Heart left ventricle (tissue), 16 donors: ENCODE measurements at regions of chr13 and their contacts with region 1.

Region 1: DNA sequence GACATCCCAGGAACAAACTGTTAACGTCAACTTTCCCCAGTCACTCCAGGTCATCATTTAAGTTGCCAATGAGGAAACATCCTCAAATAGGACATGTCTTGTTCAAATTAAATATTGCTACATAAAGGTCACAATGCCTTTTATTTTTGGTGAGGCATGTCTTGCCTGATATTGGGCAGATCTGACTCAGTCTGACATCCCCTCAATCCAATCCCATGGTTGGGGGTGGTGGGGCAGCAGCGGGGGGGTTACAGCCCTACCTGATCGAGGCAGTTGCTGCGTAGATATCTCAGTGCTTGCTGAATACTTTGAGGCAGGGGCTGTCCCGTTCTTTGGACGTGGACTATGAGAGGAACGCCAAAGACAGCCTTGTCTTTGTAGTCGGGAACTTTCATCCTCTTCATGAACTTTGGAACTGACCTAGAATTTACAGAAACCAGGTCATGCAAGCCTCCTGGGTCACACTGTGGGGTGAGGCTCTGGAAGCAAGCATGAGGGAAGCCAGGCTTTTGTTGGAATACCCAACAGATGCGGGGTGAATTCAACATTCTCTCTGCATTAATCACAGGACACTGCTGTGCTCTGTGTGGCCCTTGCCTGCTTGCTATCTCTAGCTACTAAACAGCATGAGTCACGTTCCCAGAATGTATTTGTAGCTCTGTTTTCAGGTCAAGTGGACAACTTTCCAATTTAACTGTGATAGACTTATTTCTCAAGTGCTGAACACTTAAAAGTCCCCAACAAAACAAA is 109.8 kb downstream of the KL start:
- DNase-seq: peak; percentile 71 to 82 (median 76)
- ATAC-seq: peak; percentile 88 to 92 (median 92)
- H3K4me3 ChIP-seq: peak overlapping the region in 4 of 12 donors; percentile 2 to 24 (median 15)
- H3K27ac ChIP-seq: peak overlapping the region; percentile 31 to 89 (median 78)
- H3K4me1 ChIP-seq: peaks cover 16 to 77% (median 57%) of the 10 kb centered on the region in 12 donors
- H3K27me3 ChIP-seq: no peaks in the 10 kb centered on the region
- CTCF ChIP-seq: no peak
- POLR2A ChIP-seq: no peak

Region 2: DNA sequence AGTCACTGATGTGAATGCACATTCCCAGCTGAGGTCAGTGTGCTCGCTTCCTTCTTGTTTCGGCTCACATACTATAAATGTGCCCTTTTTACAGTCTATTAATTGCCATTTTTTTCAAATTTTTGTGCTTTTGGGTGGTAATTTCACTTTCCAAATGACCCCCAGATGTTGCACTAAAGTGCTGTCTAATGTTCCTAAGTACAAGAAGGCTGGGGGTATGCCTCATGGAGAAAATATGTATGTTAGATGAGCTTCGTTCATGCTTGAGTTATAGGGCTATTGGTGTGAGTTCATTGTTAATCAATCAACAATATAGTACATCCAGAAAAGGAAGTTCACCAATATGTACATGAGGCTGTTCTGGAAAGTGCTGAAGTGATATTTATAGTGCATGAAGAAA is 25.1 kb before region 1 on chr13:
- intact Hi-C with region 1: loop called in 1 of 10 experiments (anchors 1 kb)
- DNase-seq: no peak
- ATAC-seq: no peak
- H3K4me3 ChIP-seq: no peak overlapping the region
- H3K27ac ChIP-seq: no peak overlapping the region
- H3K4me1 ChIP-seq: peaks cover 0 to 5% (median 0%) of the 10 kb centered on the region in 12 donors
- H3K27me3 ChIP-seq: no peaks in the 10 kb centered on the region
- CTCF ChIP-seq: no peak
- POLR2A ChIP-seq: no peak

Region 3: GRCh38 chr13:33174931-33175330 is 48.9 kb after region 1 on chr13:
- intact Hi-C with region 1: loop called in 2 of 10 experiments (anchors 10 kb)
- DNase-seq: no peak
- ATAC-seq: peak in 1 of 4 donors; percentile 30
- H3K4me3 ChIP-seq: no peak overlapping the region
- H3K27ac ChIP-seq: peak overlapping the region in 8 of 12 donors; percentile 8 to 53 (median 18)
- H3K4me1 ChIP-seq: peaks cover 0 to 71% (median 24%) of the 10 kb centered on the region in 12 donors
- H3K27me3 ChIP-seq: no peaks in the 10 kb centered on the region
- CTCF ChIP-seq: no peak
- POLR2A ChIP-seq: no peak

Region 4: GRCh38 chr13:33204130-33204927 is 78.3 kb after region 1 on chr13:
- intact Hi-C with region 1: loop called in 3 of 10 experiments (anchors 5 to 10 kb)
- DNase-seq: peak; percentile 63 to 90 (median 87)
- ATAC-seq: peak; percentile 59 to 84 (median 82)
- H3K4me3 ChIP-seq: peak overlapping the region in 11 of 12 donors; percentile 15 to 63 (median 47)
- H3K27ac ChIP-seq: peak overlapping the region; percentile 65 to 90 (median 82)
- H3K4me1 ChIP-seq: peaks cover 3 to 94% (median 79%) of the 10 kb centered on the region in 12 donors
- H3K27me3 ChIP-seq: no peaks in the 10 kb centered on the region
- CTCF ChIP-seq: no peak
- POLR2A ChIP-seq: no peak

Region 5: DNA sequence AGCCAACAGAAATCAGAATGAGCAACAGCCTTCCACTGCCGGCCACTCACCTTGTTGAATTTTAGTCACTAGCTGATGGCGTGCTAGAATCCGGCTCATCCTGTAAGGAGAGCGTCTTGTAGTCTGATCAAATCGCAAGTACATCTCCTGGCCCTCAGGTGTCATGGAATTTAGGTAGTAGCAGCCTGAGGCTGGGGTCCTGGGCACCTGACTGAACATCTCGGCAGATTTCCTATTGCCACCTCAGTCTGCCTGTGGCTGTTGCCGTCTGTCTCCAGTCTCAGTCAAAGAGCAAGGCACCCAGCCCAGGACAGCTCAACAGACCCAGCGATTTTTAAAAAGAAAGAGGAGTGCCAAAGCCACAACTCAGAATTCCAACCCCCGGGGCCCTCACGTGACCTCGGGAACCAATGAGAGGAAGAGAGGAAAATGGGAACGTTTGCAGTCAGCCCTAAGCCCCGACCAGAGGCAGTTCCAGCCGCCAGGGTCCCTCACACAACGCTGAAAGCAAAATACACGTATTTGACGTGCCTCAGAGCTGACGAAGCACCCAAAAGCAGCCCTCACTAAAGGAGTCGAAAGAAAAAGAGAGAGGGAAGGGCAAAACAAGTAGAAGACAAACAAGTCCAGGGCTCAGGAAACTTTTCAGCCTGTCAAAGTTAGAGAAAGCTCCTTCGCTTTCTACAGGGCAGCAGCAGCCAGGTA is 159.6 kb after region 1 on chr13 and contains the start of gene STARD13:
- intact Hi-C with region 1: loop called in 3 of 10 experiments (anchors 5 to 10 kb)
- DNase-seq: peak; percentile 92 to 96 (median 95)
- ATAC-seq: peak; percentile 93 to 97 (median 95)
- H3K4me3 ChIP-seq: peak within 1 kb of the TSS; percentile 50 to 84 (median 68)
- H3K27ac ChIP-seq: peak within 1 kb of the TSS; percentile 89 to 98 (median 96)
- H3K4me1 ChIP-seq: peaks cover 0 to 56% (median 33%) of the 10 kb centered on the region in 12 donors
- H3K27me3 ChIP-seq: no peaks in the 10 kb centered on the region
- CTCF ChIP-seq: peak in 11 of 12 donors; percentile 11 to 68 (median 46)
- POLR2A ChIP-seq: peak in 1 of 2 donors; percentile 95
- total RNA-seq, gene STARD13: 18.6 to 39.2 (median 31.6) TPM